Calu3 (cell line): ENCODE measurements at regions of chr1 and their contacts with region 1.

Region 1: GRCh38 chr1:11838349-11839272 is 9.0 kb downstream of the NPPA start:
- DNase-seq: peak; percentile 71
- H3K4me3 Mint-ChIP-seq: no peak overlapping the region
- H3K27ac Mint-ChIP-seq: no peak overlapping the region
- H3K4me1 Mint-ChIP-seq: no peaks in the 10 kb centered on the region
- H3K27me3 Mint-ChIP-seq: no peaks in the 10 kb centered on the region
- CTCF ChIP-seq: peak; percentile 81

Region 2: GRCh38 chr1:11434506-11434905 is 404.1 kb before region 1 on chr1:
- CTCF ChIA-PET with region 1: no interaction called
- intact Hi-C with region 1: no loop called
- DNase-seq: no peak
- H3K4me3 Mint-ChIP-seq: no peak overlapping the region
- H3K27ac Mint-ChIP-seq: no peak overlapping the region
- H3K4me1 Mint-ChIP-seq: no peaks in the 10 kb centered on the region
- H3K27me3 Mint-ChIP-seq: peaks cover 92% of the 10 kb centered on the region
- CTCF ChIP-seq: no peak

Region 3: DNA sequence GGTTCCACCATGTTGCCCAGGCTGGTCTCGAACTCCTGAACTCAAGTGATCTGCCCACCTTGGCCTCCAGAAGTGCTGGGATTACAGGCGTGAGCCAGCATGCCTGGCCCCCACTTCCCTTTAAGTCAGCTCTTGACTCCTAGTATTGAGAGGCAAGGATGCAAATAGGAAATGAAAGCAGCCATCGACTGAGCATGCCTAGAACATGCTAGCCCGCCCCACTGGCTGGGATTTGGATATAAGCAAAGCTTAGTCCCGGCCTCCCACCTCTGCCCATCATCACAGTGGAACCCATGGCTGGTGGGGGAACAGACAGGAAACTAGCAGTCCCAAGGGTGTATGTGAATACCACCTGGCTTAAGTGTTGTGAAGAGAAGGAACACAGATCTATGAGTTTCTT is 66.2 kb before region 1 on chr1:
- CTCF ChIA-PET with region 1: no interaction called
- intact Hi-C with region 1: no loop called
- DNase-seq: no peak
- H3K4me3 Mint-ChIP-seq: no peak overlapping the region
- H3K27ac Mint-ChIP-seq: no peak overlapping the region
- H3K4me1 Mint-ChIP-seq: no peaks in the 10 kb centered on the region
- H3K27me3 Mint-ChIP-seq: peaks cover 20% of the 10 kb centered on the region
- CTCF ChIP-seq: no peak

Region 4: GRCh38 chr1:11893907-11894251 is 55.3 kb after region 1 on chr1:
- CTCF ChIA-PET with region 1: no interaction called
- intact Hi-C with region 1: loop called (anchors 1 kb)
- DNase-seq: peak; percentile 79
- H3K4me3 Mint-ChIP-seq: no peak overlapping the region
- H3K27ac Mint-ChIP-seq: no peak overlapping the region
- H3K4me1 Mint-ChIP-seq: no peaks in the 10 kb centered on the region
- H3K27me3 Mint-ChIP-seq: peaks cover 55% of the 10 kb centered on the region
- CTCF ChIP-seq: peak; percentile 80

Region 5: GRCh38 chr1:11907275-11908094 is 68.9 kb after region 1 on chr1:
- CTCF ChIA-PET with region 1: interaction called, 10 read pairs
- intact Hi-C with region 1: no loop called
- DNase-seq: peak; percentile 82
- H3K4me3 Mint-ChIP-seq: peak overlapping the region; percentile 78
- H3K27ac Mint-ChIP-seq: peak overlapping the region; percentile 100
- H3K4me1 Mint-ChIP-seq: no peaks in the 10 kb centered on the region
- H3K27me3 Mint-ChIP-seq: no peaks in the 10 kb centered on the region
- CTCF ChIP-seq: no peak

Region 6: DNA sequence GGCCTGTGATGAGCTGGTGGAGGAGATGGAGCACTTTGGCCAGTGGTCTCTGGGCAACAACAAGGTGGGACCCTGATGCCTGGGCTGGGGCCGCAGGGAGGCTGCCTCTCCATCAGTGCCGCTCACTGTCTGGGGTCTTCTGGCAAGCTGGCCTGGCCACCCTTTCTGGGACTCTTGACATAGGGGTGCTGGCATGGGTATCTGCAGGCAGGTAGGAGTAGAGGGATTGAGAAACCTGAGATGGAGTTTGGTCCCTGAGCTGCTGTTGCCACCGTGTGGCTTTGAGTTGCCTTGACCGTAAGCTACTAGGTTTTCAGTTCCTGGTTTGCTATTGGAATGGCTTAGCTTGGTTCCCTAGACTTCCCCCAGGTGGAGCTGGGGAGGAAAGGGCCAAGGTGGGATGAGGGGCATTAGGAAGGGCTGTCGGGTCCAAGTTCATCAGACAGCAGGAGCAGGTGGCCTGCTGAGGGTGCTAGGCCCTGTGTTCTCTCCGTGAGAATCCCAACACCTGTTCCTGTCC is 128.5 kb after region 1 on chr1:
- CTCF ChIA-PET with region 1: interaction called, 7 read pairs
- intact Hi-C with region 1: loop called (anchors 1 kb)
- DNase-seq: peak; percentile 46
- H3K4me3 Mint-ChIP-seq: no peak overlapping the region
- H3K27ac Mint-ChIP-seq: no peak overlapping the region
- H3K4me1 Mint-ChIP-seq: no peaks in the 10 kb centered on the region
- H3K27me3 Mint-ChIP-seq: no peaks in the 10 kb centered on the region
- CTCF ChIP-seq: peak; percentile 49